ENCODE measurements at regions of chr22 and their contacts with region 1.

Region 1: GRCh38 chr22:22959147-22959827 is 71.7 kb downstream of the IGLL5 start:
- DNase-seq: peak; percentile 52
- H3K4me3 Mint-ChIP-seq: no peak overlapping the region
- H3K27ac Mint-ChIP-seq: no peak overlapping the region
- H3K4me1 Mint-ChIP-seq: peaks cover 4% of the 10 kb centered on the region
- H3K27me3 Mint-ChIP-seq: peaks cover 40% of the 10 kb centered on the region

Region 2: DNA sequence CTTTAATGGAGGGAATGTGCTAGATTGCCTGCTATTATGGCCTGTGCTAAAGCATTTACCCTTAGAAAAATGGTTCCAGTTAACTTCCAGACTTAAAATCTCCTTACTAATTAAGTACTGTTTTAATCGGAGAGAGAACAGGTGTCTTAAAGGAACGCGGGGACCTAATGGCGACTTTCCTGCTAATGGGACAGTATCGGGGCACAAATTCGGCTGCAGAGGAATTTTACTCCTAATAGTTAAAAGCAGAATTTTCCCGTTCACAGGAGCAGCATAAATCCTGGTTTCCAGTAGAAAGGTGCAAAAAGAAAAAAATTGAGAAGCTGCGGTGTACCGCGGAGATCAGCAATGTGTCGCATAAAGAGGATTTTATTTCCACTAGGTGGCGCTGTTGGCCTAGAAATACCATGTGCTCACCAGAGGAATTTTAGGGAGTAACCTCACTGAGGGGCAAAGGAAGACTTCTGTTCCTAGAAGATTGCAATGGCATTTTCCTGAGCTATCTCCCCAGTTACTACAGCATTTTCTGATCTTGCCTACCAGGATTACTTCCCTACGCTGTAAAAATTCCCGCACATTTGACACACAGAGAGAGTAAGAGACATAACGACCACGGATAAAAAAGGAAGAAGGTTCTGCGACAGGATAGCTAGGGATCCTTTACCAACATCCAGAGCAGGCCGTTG is 495.3 kb before region 1 on chr22:
- intact Hi-C with region 1: loop called (anchors 2 kb)
- DNase-seq: peak; percentile 23
- H3K4me3 Mint-ChIP-seq: no peak overlapping the region
- H3K27ac Mint-ChIP-seq: no peak overlapping the region
- H3K4me1 Mint-ChIP-seq: no peaks in the 10 kb centered on the region
- H3K27me3 Mint-ChIP-seq: peaks cover 20% of the 10 kb centered on the region

Region 3: GRCh38 chr22:22787786-22788459 is 171.4 kb before region 1 on chr22:
- intact Hi-C with region 1: loop called (anchors 1 kb)
- DNase-seq: peak; percentile 55
- H3K4me3 Mint-ChIP-seq: no peak overlapping the region
- H3K27ac Mint-ChIP-seq: no peak overlapping the region
- H3K4me1 Mint-ChIP-seq: peaks cover 6% of the 10 kb centered on the region
- H3K27me3 Mint-ChIP-seq: peaks cover 10% of the 10 kb centered on the region

Region 4: DNA sequence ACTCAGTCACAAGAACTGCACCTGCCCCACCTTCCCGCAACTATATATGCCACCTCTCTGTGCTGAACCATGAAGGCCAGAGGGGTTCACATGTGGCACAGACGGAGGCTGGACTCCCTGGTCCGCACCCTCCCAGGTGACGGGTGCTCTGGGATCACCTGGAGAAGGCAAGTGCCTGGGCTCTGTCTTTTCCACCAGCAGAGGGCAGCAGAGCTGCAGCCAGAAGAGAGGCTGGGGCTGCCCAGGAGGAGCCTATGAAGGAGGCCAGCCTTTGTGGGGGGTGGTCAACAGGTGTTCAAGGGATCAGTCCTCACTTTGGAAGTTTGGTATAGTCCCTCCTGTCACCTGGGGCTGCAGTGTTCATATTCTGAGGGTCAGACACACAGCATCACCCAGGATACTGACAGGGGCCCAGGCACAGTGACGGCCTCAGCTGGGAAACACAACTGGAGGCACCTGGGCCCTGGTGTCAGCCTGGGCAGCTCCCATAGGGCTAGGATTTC is 110.9 kb before region 1 on chr22:
- intact Hi-C with region 1: loop called (anchors 1 kb)
- DNase-seq: peak; percentile 49
- H3K4me3 Mint-ChIP-seq: no peak overlapping the region
- H3K27ac Mint-ChIP-seq: no peak overlapping the region
- H3K4me1 Mint-ChIP-seq: peaks cover 6% of the 10 kb centered on the region
- H3K27me3 Mint-ChIP-seq: peaks cover 43% of the 10 kb centered on the region

Region 5: GRCh38 chr22:23128269-23129108 is 169.2 kb after region 1 on chr22:
- intact Hi-C with region 1: loop called (anchors 1 kb)
- DNase-seq: peak; percentile 55
- H3K4me3 Mint-ChIP-seq: no peak overlapping the region
- H3K27ac Mint-ChIP-seq: no peak overlapping the region
- H3K4me1 Mint-ChIP-seq: no peaks in the 10 kb centered on the region
- H3K27me3 Mint-ChIP-seq: peaks cover 3% of the 10 kb centered on the region

Region 6: DNA sequence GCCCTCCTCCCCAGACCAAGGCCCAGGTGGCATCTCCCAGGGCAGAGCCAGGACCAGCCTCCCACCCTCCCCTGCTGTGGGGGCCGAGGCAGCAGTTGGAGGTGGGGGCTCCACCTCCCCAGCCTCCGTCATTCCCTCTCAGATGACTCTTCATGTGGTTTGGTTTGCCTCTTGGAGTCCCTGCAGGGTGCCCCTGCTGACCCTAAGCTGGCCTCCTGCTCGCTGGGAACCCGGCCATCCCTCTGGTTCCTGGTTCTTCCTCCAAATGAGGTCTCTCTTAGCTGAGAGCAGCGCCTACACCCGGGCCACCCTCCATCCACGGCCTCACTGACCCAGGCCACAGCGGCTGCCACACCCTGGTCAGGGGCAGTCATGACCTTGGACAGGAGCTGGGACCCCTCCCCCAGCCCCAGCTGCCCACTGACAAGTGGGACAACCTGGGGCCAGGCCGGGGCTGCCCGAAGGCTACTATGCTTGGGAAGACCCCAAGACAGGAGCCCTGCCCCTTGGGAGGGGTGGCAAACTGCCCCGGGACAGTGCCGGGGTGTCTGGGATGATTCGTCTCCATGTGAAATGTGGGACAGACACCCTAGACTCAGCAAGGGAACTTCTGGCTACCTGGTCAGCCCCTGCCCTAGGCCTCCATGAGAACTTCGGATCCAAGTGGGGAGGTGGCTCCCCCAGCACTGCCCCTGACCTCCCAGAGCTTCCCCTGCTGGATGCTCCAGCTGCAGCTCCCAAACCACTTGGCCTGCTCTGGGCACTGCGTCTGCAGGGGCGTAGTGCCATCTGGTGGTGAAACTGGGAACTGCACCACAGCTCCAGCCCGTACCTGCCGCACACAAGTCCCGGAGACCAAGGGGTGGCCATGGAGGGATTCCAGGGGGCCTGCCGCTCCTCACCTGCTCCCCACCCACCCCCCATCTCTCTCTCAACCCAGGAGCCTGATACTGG is 426.3 kb after region 1 on chr22:
- intact Hi-C with region 1: loop called (anchors 1 kb)
- DNase-seq: peak; percentile 67
- H3K4me3 Mint-ChIP-seq: no peak overlapping the region
- H3K27ac Mint-ChIP-seq: no peak overlapping the region
- H3K4me1 Mint-ChIP-seq: no peaks in the 10 kb centered on the region
- H3K27me3 Mint-ChIP-seq: peaks cover 2% of the 10 kb centered on the region

Measured in activated T-helper 1 cell treated with anti-CD3 and anti-CD28 coated beads, Interleukin-12 subunit alpha, Interleukin-12 subunit beta, Interleukin-2, Interleukin-4 antibody, amounts not matched to agents 30 ng/mL and 10 ng/mL and 1 ng/mL, durations not matched to agents 14 hours and 24 hours and 36 hours (primary cell).